Dorsolateral prefrontal cortex (tissue), 120 donors: ENCODE measurements at regions of chr3 and their contacts with region 1.

Region 1: GRCh38 chr3:182364723-182365650 is 428.3 kb upstream of the ATP11B start:
- DNase-seq: peak; percentile 13 to 76 (median 66)
- H3K4me3 ChIP-seq: peak overlapping the region; percentile 0 to 69 (median 47)
- H3K27ac ChIP-seq: peak overlapping the region in 57 of 59 donors; percentile 9 to 91 (median 80)
- H3K27me3 ChIP-seq: peaks cover 0 to 8% (median 0%) of the 10 kb centered on the region in 45 donors
- CTCF ChIP-seq: peak in 13 of 56 donors; percentile 2 to 48 (median 13)

Region 2: GRCh38 chr3:182490596-182491491 is 125.9 kb after region 1 on chr3:
- intact Hi-C with region 1: loop called in 1 of 2 experiments (anchors 5 kb)
- DNase-seq: no peak
- H3K4me3 ChIP-seq: peak overlapping the region in 4 of 59 donors; percentile 1 to 27 (median 6)
- H3K27ac ChIP-seq: peak overlapping the region in 16 of 59 donors; percentile 4 to 73 (median 36)
- H3K27me3 ChIP-seq: no peaks in the 10 kb centered on the region
- CTCF ChIP-seq: peak; percentile 47 to 82 (median 68)

Region 3: GRCh38 chr3:182508916-182509711 is 144.1 kb after region 1 on chr3:
- intact Hi-C with region 1: loop called in 1 of 2 experiments (anchors 10 kb)
- DNase-seq: peak in 1 of 10 donors; percentile 34
- H3K4me3 ChIP-seq: peak overlapping the region in 46 of 59 donors; percentile 1 to 58 (median 34)
- H3K27ac ChIP-seq: peak overlapping the region in 51 of 59 donors; percentile 3 to 85 (median 69)
- H3K27me3 ChIP-seq: no peaks in the 10 kb centered on the region
- CTCF ChIP-seq: no peak

Region 4: GRCh38 chr3:182683453-182683852 is 318.5 kb after region 1 on chr3:
- intact Hi-C with region 1: loop called (anchors 5 to 10 kb)
- DNase-seq: peak in 9 of 10 donors; percentile 35 to 85 (median 63)
- H3K4me3 ChIP-seq: peak overlapping the region in 58 of 59 donors; percentile 21 to 84 (median 72)
- H3K27ac ChIP-seq: peak overlapping the region in 55 of 59 donors; percentile 12 to 86 (median 75)
- H3K27me3 ChIP-seq: peaks cover 0 to 27% (median 2%) of the 10 kb centered on the region in 45 donors
- CTCF ChIP-seq: peak; percentile 76 to 99 (median 93)